T-cell (primary cell): ENCODE measurements at regions of chr17 and their contacts with region 1.

Region 1: DNA sequence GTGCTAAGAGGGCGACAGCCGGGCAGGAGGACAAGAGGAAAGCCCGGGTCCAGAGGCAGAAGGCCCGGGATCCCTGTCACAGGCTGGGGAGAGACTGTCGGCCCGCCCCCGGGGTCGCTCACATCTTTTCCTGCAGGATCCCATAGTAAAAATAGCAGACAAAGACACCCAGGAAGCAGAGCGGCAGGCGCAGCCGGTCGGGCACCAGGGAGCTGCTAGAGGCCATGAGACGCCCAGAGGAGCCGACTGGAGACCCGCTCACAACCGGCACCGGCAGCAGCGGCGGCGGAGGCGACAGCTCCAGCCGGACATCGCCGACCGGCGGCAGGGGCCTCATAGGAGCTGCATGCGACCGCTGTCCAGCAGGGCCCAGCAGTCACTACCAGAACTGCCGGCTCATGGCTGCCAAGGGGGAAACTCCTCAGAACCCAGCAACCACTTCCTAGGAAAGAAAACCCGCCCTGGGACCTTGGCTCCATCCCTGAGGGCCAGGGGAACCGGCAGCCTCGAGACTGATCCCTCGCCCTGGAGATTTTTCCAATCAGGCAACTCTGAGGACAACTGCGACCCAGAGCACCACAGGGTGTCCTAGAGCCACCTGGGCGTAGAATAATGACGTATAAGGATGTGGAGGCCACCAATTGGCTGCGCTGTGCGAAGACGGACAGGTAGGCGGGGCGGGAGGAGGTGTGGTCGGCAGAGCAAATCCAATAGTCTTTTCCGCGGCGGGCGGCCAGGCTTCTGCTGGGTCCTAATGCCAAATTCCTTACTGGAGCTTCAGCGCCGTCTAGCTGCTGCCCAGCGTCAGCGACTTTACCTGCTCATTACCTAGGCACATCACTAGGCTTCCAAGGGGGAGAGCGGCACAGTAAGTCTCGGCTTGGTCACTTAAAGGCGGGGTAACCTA is at the start of gene SLC35B1:
- DNase-seq: peak; percentile 91 to 100 (median 99)
- ATAC-seq: peak; percentile 96 to 99 (median 96)
- H3K4me3 ChIP-seq: peak within 1 kb of the TSS; percentile 68 to 97
- H3K4me3 Mint-ChIP-seq: peak within 1 kb of the TSS; percentile 91 to 97 (median 95)
- H3K27ac ChIP-seq: peak within 1 kb of the TSS; percentile 93
- H3K27ac Mint-ChIP-seq: peak within 1 kb of the TSS; percentile 97
- H3K4me1 ChIP-seq: peaks cover 9 to 33% of the 10 kb centered on the region in 2 experiments
- H3K4me1 Mint-ChIP-seq: peaks cover 35 to 55% (median 42%) of the 10 kb centered on the region in 3 donors
- H3K27me3 ChIP-seq: no peaks in the 10 kb centered on the region
- H3K27me3 Mint-ChIP-seq: no peaks in the 10 kb centered on the region
- total RNA-seq, gene SLC35B1: 40.5 to 57.1 (median 42.8) TPM

Region 2: DNA sequence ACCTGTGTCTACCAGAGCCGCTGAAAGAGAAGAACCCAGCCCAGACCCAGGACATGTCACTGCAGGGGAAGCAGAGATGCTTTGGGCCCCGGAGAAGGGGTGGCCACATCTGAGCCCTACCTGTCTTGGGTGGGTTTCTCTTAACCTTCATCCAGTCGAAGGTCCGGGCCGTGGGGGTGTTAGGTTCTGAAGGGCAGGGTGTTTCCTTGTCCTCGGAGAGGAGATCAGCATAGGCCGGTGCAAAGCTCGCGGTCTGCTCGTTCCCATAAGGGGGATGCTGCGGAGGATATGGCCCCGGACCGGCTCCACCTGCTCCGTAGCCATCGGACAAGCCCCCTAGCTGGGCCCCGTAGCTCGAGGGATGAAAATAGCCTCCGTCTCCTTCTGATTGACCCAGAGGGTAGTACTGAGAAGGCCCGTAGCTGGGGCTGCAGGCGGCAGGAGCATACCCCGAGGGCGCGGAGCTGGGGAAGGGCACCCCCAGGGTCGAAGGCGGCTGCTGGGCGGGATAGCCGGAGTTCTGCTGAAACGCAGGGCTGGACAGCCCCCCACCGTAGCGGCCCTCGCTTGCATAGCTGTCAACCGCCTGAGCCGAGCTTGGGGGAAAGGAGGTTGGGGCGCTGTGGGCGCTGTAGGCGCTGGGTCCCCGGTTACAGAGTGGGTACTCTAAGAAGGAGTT is 1177.5 kb before region 1 on chr17:
- CTCF ChIA-PET with region 1: no interaction called
- POLR2A ChIA-PET with region 1: no interaction called
- DNase-seq: no peak
- ATAC-seq: no peak
- H3K4me3 ChIP-seq: no peak overlapping the region
- H3K4me3 Mint-ChIP-seq: no peak overlapping the region
- H3K27ac ChIP-seq: no peak overlapping the region
- H3K27ac Mint-ChIP-seq: no peak overlapping the region
- H3K4me1 ChIP-seq: peaks cover 0 to 13% of the 10 kb centered on the region in 2 experiments
- H3K4me1 Mint-ChIP-seq: peaks cover 6 to 16% (median 9%) of the 10 kb centered on the region in 3 donors
- H3K27me3 ChIP-seq: peaks cover 0 to 46% of the 10 kb centered on the region in 2 experiments
- H3K27me3 Mint-ChIP-seq: peaks cover 14 to 23% of the 10 kb centered on the region in 2 donors

Region 3: DNA sequence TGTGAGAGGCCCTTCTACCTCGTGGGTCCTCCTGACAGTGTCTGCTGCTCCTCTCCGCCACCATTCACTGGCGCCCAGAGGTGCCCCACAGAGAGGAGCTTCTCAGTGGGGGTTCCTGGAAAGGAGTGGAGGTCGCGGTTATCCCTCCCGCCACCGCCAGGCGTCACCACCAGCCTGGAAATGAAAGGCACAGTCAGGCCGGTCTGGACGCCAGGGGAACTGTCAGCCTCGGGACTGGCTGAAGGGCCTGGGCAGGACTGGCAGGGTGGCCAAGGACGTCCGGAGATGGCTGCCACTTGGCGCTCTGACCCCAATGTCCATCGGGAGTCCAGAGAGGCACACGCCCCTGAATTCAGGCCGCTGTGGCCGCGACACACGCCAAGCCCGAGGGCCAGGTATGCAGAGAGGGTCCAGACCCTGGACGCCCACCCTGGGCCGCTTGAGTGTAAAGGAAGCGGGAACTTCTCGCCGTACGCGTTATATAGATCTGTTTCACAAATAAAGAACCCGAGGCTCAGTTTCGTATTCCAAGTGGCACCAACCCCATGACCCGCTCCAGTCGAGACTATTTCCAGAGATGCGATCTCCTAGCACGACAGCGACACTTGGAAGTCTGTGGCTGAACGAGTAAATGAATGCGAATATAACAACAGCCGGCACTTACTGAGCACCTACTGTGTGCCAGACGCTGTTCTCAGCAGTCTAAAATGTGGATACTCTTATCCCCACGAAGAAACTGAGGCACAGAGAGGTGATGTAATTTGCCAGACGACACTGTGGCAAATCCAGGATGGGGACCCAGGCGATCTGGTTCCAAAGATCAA is 139.8 kb before region 1 on chr17:
- CTCF ChIA-PET with region 1: interaction called, 6 to 13 read pairs
- POLR2A ChIA-PET with region 1: interaction called in 1 of 2 experiments, 3 read pairs
- DNase-seq: peak; percentile 32 to 84 (median 72)
- ATAC-seq: peak; percentile 48 to 55 (median 52)
- H3K4me3 ChIP-seq: peak overlapping the region; percentile 12 to 48
- H3K4me3 Mint-ChIP-seq: peak overlapping the region; percentile 49 to 69 (median 67)
- H3K27ac ChIP-seq: no peak overlapping the region
- H3K27ac Mint-ChIP-seq: peak overlapping the region in 1 of 2 donors; percentile 11
- H3K4me1 ChIP-seq: peaks cover 0 to 29% of the 10 kb centered on the region in 2 experiments
- H3K4me1 Mint-ChIP-seq: peaks cover 13 to 17% (median 16%) of the 10 kb centered on the region in 3 donors
- H3K27me3 ChIP-seq: peaks cover 0 to 46% of the 10 kb centered on the region in 2 experiments
- H3K27me3 Mint-ChIP-seq: peaks cover 4 to 26% of the 10 kb centered on the region in 2 donors

Region 4: DNA sequence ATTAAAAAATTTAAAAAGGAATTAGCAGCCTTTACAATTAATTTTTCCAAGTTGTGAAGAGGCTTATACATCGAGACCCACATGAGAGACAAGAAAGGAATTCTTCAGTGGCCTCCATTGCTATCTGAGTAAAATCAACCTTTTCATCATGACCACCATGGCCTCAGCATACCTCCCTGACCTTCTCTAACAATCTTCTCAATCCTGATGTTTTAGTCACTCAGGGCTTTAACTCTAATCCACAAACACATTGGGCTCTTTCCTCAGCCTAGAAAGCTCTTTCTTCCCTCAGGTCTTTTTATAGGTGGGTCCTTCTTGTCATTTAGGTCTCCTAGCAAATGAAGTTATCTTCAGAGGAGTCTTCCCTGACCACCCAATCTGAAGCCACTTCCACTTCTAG is 76.4 kb before region 1 on chr17:
- CTCF ChIA-PET with region 1: interaction called in 1 of 2 experiments, 10 read pairs
- POLR2A ChIA-PET with region 1: no interaction called
- DNase-seq: no peak
- ATAC-seq: no peak
- H3K4me3 ChIP-seq: no peak overlapping the region
- H3K4me3 Mint-ChIP-seq: no peak overlapping the region
- H3K27ac ChIP-seq: no peak overlapping the region
- H3K27ac Mint-ChIP-seq: peak overlapping the region in 1 of 2 donors; percentile 65
- H3K4me1 ChIP-seq: peaks cover 0 to 2% of the 10 kb centered on the region in 2 experiments
- H3K4me1 Mint-ChIP-seq: peaks cover 59 to 66% (median 64%) of the 10 kb centered on the region in 3 donors
- H3K27me3 ChIP-seq: no peaks in the 10 kb centered on the region
- H3K27me3 Mint-ChIP-seq: no peaks in the 10 kb centered on the region

Region 5: GRCh38 chr17:49748791-49749190 is 40.9 kb after region 1 on chr17:
- CTCF ChIA-PET with region 1: interaction called in 1 of 2 experiments, 12 read pairs
- POLR2A ChIA-PET with region 1: no interaction called
- DNase-seq: peak in 34 of 35 experiments; percentile 19 to 78 (median 56)
- ATAC-seq: peak; percentile 70 to 78 (median 74)
- H3K4me3 ChIP-seq: no peak overlapping the region
- H3K4me3 Mint-ChIP-seq: peak overlapping the region; percentile 50 to 64 (median 63)
- H3K27ac ChIP-seq: peak overlapping the region; percentile 97
- H3K27ac Mint-ChIP-seq: peak overlapping the region; percentile 96 to 98
- H3K4me1 ChIP-seq: peaks cover 53 to 89% of the 10 kb centered on the region in 2 experiments
- H3K4me1 Mint-ChIP-seq: peaks cover 62 to 90% (median 89%) of the 10 kb centered on the region in 3 donors
- H3K27me3 ChIP-seq: no peaks in the 10 kb centered on the region
- H3K27me3 Mint-ChIP-seq: no peaks in the 10 kb centered on the region

Region 6: GRCh38 chr17:49779739-49780231 is 71.9 kb after region 1 on chr17:
- CTCF ChIA-PET with region 1: interaction called in 1 of 2 experiments, 11 read pairs
- POLR2A ChIA-PET with region 1: no interaction called
- DNase-seq: peak in 4 of 35 experiments; percentile 13 to 62 (median 22)
- ATAC-seq: peak; percentile 41 to 73 (median 54)
- H3K4me3 ChIP-seq: no peak overlapping the region
- H3K4me3 Mint-ChIP-seq: no peak overlapping the region
- H3K27ac ChIP-seq: no peak overlapping the region
- H3K27ac Mint-ChIP-seq: no peak overlapping the region
- H3K4me1 ChIP-seq: peaks cover 0 to 5% of the 10 kb centered on the region in 2 experiments
- H3K4me1 Mint-ChIP-seq: peaks cover 6 to 14% (median 8%) of the 10 kb centered on the region in 3 donors
- H3K27me3 ChIP-seq: no peaks in the 10 kb centered on the region
- H3K27me3 Mint-ChIP-seq: peaks cover 0 to 2% of the 10 kb centered on the region in 2 donors

Region 7: DNA sequence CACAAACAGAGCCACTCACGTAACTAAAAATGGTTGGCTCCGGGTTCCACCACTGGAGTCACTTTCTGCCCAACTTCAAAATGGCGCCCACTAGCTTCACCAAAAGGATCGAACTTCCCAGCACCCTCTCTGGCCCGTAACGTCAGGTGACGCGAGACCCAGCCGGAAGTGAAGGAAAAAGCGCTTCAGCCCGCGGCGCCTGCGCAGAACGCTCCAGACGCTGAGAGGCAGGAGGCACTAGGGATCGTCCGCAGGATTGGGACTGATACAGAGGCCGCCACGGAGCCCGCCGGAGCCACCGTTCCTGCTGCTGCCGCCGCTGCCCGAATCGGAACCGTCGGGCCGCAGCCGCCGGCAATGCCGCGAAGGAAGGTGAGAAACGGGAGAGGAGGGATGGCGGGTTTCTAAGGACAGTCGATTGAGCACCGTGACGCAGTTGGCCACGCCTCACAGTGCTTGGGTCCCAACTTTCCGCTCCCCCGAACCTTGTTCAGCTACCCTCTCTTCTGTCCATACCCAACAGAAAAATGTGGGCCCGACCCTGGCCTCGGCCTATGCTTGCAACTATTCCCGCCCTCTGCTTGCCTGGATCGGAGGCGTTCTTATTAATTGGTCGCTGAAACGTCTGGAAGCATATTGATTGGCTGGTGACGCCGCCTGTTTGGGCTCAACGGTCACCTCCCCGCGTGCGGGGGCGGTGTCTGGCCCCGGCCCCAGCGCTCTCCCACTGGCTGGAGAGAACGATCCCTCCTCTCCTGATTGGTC is 80.8 kb after region 1 on chr17 and contains the start of gene KAT7:
- CTCF ChIA-PET with region 1: interaction called in 1 of 2 experiments, 11 read pairs
- POLR2A ChIA-PET with region 1: interaction called, 3 to 10 read pairs
- DNase-seq: peak; percentile 92 to 100 (median 99)
- ATAC-seq: peak; percentile 84 to 88 (median 88)
- H3K4me3 ChIP-seq: peak within 1 kb of the TSS; percentile 95 to 99
- H3K4me3 Mint-ChIP-seq: peak within 1 kb of the TSS; percentile 89 to 99 (median 95)
- H3K27ac ChIP-seq: peak within 1 kb of the TSS; percentile 98
- H3K27ac Mint-ChIP-seq: peak within 1 kb of the TSS; percentile 98 to 99
- H3K4me1 ChIP-seq: peaks cover 16 to 30% of the 10 kb centered on the region in 2 experiments
- H3K4me1 Mint-ChIP-seq: peaks cover 58 to 62% (median 58%) of the 10 kb centered on the region in 3 donors
- H3K27me3 ChIP-seq: no peaks in the 10 kb centered on the region
- H3K27me3 Mint-ChIP-seq: no peaks in the 10 kb centered on the region
- total RNA-seq, gene KAT7: 96.8 to 197 (median 99.7) TPM